ENCODE measurements at regions of chr7 and their contacts with region 1.

Region 1: GRCh38 chr7:74656837-74657691 is 454 bp upstream of the GTF2I start:
- DNase-seq: peak; percentile 93 to 99 (median 98)

Region 2: GRCh38 chr7:74449809-74450397 is 207.2 kb before region 1 on chr7:
- intact Hi-C with region 1: loop called (anchors 10 kb)
- DNase-seq: peak in 33 of 42 donors; percentile 23 to 88 (median 65)

Measured in head of caudate nucleus (tissue), 42 donors.